ENCODE measurements at regions of chr16 and their contacts with region 1.

Region 1: GRCh38 chr16:6081320-6081976 is 983.9 kb upstream of the EEF2KMT start:
- DNase-seq: peak; percentile 9
- H3K4me3 ChIP-seq: no peak overlapping the region
- H3K27ac ChIP-seq: no peak overlapping the region
- H3K4me1 ChIP-seq: no peaks in the 10 kb centered on the region
- H3K27me3 ChIP-seq: no peaks in the 10 kb centered on the region
- CTCF ChIP-seq: peak; percentile 18 to 42

Region 2: GRCh38 chr16:5228369-5228768 is 853.1 kb before region 1 on chr16:
- CTCF ChIA-PET with region 1: no interaction called
- dilution Hi-C with region 1: no loop called
- in situ Hi-C with region 1: loop called in 1 of 2 experiments (anchors 25 kb)
- intact Hi-C with region 1: no loop called
- DNase-seq: no peak
- H3K4me3 ChIP-seq: no peak overlapping the region
- H3K27ac ChIP-seq: no peak overlapping the region
- H3K4me1 ChIP-seq: no peaks in the 10 kb centered on the region
- H3K27me3 ChIP-seq: no peaks in the 10 kb centered on the region
- CTCF ChIP-seq: no peak

Measured in mammary epithelial cell (primary cell).